Right ventricle myocardium inferior (tissue), 1 donor: ENCODE measurements at regions of chr7 and their contacts with region 1.

Region 1: GRCh38 chr7:102236592-102237287 is 49.9 kb upstream of the SH2B2 start:
- DNase-seq: no peak
- ATAC-seq: peak; percentile 78

Region 2: GRCh38 chr7:101602484-101603241 is 634.1 kb before region 1 on chr7:
- intact Hi-C with region 1: loop called (anchors 10 kb)
- DNase-seq: peak; percentile 86
- ATAC-seq: peak; percentile 78

Region 3: DNA sequence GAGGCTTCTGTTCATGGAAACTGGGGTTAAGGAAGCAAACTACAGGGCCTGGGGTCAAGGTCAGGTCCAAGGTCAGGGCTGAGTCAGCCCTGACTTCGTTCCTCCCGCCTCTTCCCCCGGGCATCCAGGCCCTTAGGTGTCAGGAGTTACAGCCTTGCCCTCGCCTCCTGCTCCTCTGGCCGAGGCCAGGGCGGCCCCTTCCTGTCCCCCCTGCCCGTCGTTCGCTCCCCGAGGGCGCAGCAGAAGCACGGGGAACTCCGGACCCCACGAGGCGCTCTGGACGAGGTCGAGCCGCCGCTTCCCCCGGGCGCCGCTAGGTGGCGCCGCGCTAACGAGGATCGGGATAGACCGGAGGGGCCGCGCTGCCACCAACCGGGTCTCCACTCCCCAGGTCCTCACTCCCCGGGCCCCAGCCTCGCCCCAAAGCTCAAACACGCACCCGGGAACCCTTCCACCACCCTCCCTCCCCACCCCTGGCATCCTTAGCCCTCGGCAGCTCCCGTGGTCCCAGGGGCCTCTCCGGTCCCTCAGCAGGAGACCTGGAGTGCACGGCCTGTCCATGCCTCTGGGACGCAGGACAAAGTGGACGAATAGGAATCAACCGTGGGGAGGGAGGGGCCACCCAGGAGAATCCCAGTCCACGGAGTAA is 548.4 kb before region 1 on chr7:
- intact Hi-C with region 1: loop called (anchors 5 kb)
- DNase-seq: peak; percentile 93
- ATAC-seq: peak; percentile 91

Region 4: DNA sequence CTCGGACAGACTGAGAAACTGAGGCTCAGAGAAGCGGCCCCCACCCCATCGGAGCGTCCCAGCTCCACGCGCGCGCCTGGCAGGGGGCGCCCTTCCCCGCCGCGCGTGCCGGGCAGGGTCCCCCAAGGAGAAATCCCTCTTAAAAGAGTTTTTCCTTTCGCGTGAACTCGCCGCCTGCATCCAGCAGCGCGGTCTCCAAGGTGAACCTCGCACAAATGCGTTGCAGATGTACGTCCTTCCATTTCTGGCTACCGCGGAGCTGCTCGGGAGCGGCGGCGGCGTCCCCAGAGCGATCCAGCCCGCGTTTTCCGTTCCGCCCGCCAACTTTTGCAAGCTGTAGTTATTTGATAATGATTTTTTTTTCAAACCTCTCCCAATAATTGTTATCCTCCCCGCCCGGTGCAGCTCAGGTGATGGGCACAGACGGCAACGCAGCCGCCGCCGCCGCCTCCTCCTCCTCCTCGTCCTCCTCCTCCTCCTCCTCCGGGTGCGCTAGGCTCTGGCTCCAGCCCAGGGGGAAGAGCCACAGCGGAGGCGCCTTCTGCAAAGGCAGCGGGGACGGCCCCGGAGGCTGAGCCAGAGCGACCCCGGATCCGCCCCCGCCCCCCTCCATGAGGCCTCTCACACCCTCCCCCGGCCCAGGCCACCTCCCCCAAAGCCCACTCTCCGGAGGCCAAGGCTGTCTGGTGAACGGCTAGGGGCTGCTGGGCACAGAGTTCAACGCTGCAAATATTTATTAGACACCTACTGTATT is 493.3 kb before region 1 on chr7:
- intact Hi-C with region 1: loop called (anchors 10 kb)
- DNase-seq: peak; percentile 80
- ATAC-seq: peak; percentile 61

Region 5: DNA sequence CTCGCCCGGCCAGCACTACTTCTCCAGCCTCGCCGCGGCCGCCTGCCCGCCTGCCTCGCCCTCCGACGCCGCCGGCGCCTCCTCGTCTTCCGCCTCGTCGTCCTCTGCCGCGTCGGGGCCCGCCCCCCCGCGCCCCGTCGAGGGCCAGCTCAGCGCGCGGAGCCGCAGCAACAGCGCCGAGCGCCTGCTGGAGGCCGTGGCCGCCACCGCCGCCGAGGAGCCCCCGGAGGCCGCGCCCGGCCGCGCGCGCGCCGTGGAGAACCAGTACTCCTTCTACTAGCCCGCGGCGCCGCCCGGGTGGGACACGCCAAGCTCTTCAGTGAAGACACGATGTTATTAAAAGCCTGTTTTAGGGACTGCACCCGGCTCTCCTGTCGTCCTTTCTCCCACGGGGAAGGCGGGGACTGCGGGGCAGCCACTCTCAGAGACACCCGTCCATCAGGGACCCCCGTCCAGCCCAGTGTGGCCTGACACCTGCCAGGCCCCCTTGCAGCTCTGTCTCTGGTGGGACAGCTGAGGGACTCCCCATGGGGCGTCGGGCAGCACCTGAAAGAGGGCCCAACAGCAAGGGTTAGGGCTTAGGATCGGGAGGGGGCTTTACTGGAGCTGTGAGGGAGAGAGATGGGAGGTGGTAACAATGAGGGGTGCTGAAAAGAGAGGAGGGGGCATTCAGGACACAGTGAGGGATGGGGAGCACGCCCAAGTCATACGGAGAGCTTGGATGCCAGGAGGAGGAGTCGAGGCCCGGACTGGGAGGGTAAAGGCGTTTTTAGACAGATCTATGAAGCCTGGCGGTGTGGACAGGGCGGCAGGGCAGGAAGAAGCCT is 84.8 kb after region 1 on chr7:
- intact Hi-C with region 1: no loop called
- DNase-seq: no peak
- ATAC-seq: no peak

Region 6: DNA sequence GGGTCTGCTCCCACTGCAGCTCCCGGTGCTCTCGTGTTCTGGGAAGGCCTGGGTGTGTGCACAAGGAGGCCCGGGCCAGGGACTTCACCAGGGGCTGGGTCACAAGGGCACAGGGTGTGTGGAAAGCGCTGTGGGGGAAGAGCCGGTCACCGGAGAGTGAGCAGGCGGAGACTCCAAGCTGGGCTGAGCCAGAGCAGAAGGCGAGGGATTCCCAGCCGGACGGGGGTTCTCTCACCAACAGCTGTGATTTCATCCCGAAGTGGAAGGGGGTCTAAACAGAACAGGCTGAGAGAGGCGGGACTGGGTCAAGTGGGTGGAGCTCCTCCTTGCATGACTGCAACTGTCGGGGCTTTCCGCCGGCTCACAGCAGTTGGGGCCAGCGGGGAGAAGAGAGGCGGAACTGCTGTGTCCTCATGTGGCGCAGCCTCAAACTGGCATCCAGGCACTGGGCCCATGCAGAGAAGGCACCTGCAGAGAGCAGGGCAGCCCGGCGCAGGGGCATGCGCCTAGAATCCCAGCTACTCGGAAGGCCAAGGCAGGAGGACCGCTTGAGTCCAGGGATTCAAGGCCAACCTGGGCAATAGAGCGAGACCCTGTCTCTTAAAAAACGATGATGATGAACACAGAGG is 189.0 kb after region 1 on chr7:
- intact Hi-C with region 1: no loop called
- DNase-seq: peak; percentile 86
- ATAC-seq: peak; percentile 32